ENCODE measurements at regions of chr12 and their contacts with region 1.

Region 1: DNA sequence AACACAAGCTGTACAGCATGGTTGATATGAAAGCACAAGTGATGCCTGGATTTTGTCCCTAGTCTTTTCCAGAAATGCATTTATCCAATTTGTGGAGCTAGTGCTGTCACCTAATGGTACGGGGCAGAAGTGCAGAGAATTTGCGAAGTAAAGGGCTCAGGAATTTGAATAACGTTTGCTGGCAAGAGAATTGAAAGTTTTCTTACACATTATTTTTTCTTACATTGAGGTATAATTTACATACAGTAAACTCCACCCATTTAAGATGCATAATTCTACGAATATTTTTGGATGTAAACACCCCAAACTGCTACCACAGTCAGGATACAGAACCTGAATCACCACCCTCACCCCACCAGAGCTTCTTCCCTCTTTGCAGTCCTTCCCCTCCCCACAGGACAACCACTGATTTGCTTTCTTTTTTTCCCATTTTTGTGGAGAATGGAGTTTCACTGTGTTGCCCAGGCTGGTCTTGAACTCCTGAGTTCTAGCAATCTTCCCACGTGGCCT is 3.5 kb downstream of the AICDA start:
- DNase-seq: no peak
- ATAC-seq: peak in 1 of 8 donors; percentile 41
- H3K4me3 ChIP-seq: peak overlapping the region in 1 of 10 donors; percentile 4
- H3K27ac ChIP-seq: peak overlapping the region in 1 of 10 donors; percentile 22
- H3K4me1 ChIP-seq: peaks cover 0 to 9% (median 0%) of the 10 kb centered on the region in 9 donors
- H3K27me3 ChIP-seq: peaks cover 0 to 14% (median 7%) of the 10 kb centered on the region in 7 donors
- CTCF ChIP-seq: peak; percentile 44 to 80 (median 70)

Region 2: GRCh38 chr12:8544295-8544694 is 64.8 kb before region 1 on chr12:
- intact Hi-C with region 1: loop called (anchors 1 to 10 kb)
- DNase-seq: peak in 1 of 2 donors; percentile 60
- ATAC-seq: peak in 6 of 8 donors; percentile 63 to 78 (median 68)
- H3K4me3 ChIP-seq: no peak overlapping the region
- H3K27ac ChIP-seq: no peak overlapping the region
- H3K4me1 ChIP-seq: peaks cover 0 to 13% (median 0%) of the 10 kb centered on the region in 9 donors
- H3K27me3 ChIP-seq: peaks cover 0 to 20% (median 4%) of the 10 kb centered on the region in 7 donors
- CTCF ChIP-seq: peak; percentile 83 to 96 (median 93)

Region 3: GRCh38 chr12:8549381-8549780 is 59.7 kb before region 1 on chr12:
- intact Hi-C with region 1: loop called (anchors 1 to 10 kb)
- DNase-seq: no peak
- ATAC-seq: no peak
- H3K4me3 ChIP-seq: no peak overlapping the region
- H3K27ac ChIP-seq: no peak overlapping the region
- H3K4me1 ChIP-seq: peaks cover 0 to 5% (median 0%) of the 10 kb centered on the region in 9 donors
- H3K27me3 ChIP-seq: peaks cover 0 to 5% (median 0%) of the 10 kb centered on the region in 7 donors
- CTCF ChIP-seq: no peak

Region 4: GRCh38 chr12:8936735-8937134 is 327.6 kb after region 1 on chr12:
- intact Hi-C with region 1: no loop called
- DNase-seq: no peak
- ATAC-seq: no peak
- H3K4me3 ChIP-seq: no peak overlapping the region
- H3K27ac ChIP-seq: no peak overlapping the region
- H3K4me1 ChIP-seq: no peaks in the 10 kb centered on the region
- H3K27me3 ChIP-seq: no peaks in the 10 kb centered on the region
- CTCF ChIP-seq: no peak

Measured in heart right ventricle (tissue), 16 donors.